ENCODE measurements at regions of chr17 and their contacts with region 1.

Region 1: GRCh38 chr17:46266656-46267544 is 28.0 kb upstream of the LRRC37A start:
- DNase-seq: peak; percentile 95
- ATAC-seq: peak; percentile 86
- H3K4me3 ChIP-seq: peak overlapping the region; percentile 84
- H3K27ac ChIP-seq: peak overlapping the region; percentile 64
- H3K4me1 ChIP-seq: peaks cover 41% of the 10 kb centered on the region
- H3K27me3 ChIP-seq: no peaks in the 10 kb centered on the region
- CTCF ChIP-seq: no peak

Region 2: GRCh38 chr17:46007461-46007965 is 259.4 kb before region 1 on chr17:
- CTCF ChIA-PET with region 1: no interaction called
- POLR2A ChIA-PET with region 1: interaction called, 22 read pairs
- intact Hi-C with region 1: no loop called
- DNase-seq: no peak
- ATAC-seq: no peak
- H3K4me3 ChIP-seq: no peak overlapping the region
- H3K27ac ChIP-seq: no peak overlapping the region
- H3K4me1 ChIP-seq: peaks cover 12% of the 10 kb centered on the region
- H3K27me3 ChIP-seq: no peaks in the 10 kb centered on the region
- CTCF ChIP-seq: no peak

Region 3: DNA sequence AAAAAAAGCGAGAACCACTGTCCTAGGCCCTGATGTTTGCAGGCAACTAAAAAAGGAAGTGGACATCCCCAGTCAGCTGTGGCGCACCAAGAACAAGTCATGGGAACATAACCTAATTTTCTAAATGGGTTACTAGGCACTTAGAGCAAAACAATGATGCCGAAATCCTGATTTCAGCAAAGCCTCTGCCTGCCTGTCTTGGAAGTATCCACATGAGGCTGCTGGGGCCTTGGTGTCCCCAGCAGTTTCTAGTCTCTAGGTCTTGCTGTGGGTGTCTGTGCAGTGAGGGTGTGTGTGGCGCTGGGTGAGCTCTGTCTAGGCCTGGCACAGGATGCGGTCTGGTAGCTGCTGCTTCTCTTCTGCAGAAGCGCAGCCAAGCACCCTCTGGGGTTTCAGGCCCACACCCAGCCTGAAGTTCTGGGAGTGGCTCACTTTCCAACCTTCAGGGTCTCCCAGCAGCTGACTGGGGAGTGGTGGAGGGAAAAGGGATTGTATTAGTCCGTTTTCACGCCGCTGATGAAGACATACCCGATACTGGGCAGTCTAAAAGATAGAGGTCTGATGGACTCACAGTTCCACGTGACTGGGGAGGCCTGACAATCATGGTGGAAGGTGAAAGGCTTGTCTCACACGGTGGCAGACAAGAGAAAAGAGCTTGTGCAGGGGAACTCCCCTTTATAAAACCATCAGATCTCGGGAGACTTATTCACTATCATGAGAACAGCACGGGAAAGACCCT is 246.7 kb before region 1 on chr17:
- CTCF ChIA-PET with region 1: no interaction called
- POLR2A ChIA-PET with region 1: no interaction called
- intact Hi-C with region 1: no loop called
- DNase-seq: no peak
- ATAC-seq: no peak
- H3K4me3 ChIP-seq: no peak overlapping the region
- H3K27ac ChIP-seq: no peak overlapping the region
- H3K4me1 ChIP-seq: no peaks in the 10 kb centered on the region
- H3K27me3 ChIP-seq: no peaks in the 10 kb centered on the region
- CTCF ChIP-seq: no peak

Measured in PC-3 (cell line).